PC-3 (cell line): ENCODE measurements at regions of chr3 and their contacts with region 1.

Region 1: GRCh38 chr3:171187706-171188290 is 161.3 kb upstream of the SLC2A2 start:
- DNase-seq: peak; percentile 61
- ATAC-seq: peak; percentile 41; the same call in 1 of the 2 replicates
- H3K4me3 ChIP-seq: no peak overlapping the region
- H3K27ac ChIP-seq: no peak overlapping the region
- H3K4me1 ChIP-seq: peaks cover 26% of the 10 kb centered on the region
- H3K27me3 ChIP-seq: no peaks in the 10 kb centered on the region
- CTCF ChIP-seq: peak; percentile 85

Region 2: GRCh38 chr3:171049861-171050444 is 137.8 kb before region 1 on chr3:
- CTCF ChIA-PET with region 1: interaction called, 3 read pairs
- POLR2A ChIA-PET with region 1: no interaction called
- intact Hi-C with region 1: loop called (anchors 1 kb)
- DNase-seq: peak; percentile 81
- ATAC-seq: peak; percentile 98
- H3K4me3 ChIP-seq: no peak overlapping the region
- H3K27ac ChIP-seq: no peak overlapping the region
- H3K4me1 ChIP-seq: peaks cover 9% of the 10 kb centered on the region
- H3K27me3 ChIP-seq: no peaks in the 10 kb centered on the region
- CTCF ChIP-seq: peak; percentile 90

Region 3: GRCh38 chr3:171261446-171261845 is 73.6 kb after region 1 on chr3:
- CTCF ChIA-PET with region 1: no interaction called
- POLR2A ChIA-PET with region 1: no interaction called
- intact Hi-C with region 1: loop called (anchors 5 kb)
- DNase-seq: peak; percentile 78
- ATAC-seq: peak; percentile 97
- H3K4me3 ChIP-seq: peak overlapping the region; percentile 20
- H3K27ac ChIP-seq: peak overlapping the region; percentile 69
- H3K4me1 ChIP-seq: peaks cover 31% of the 10 kb centered on the region
- H3K27me3 ChIP-seq: no peaks in the 10 kb centered on the region
- CTCF ChIP-seq: no peak

Region 4: GRCh38 chr3:171351676-171352075 is 163.9 kb after region 1 on chr3:
- CTCF ChIA-PET with region 1: no interaction called
- POLR2A ChIA-PET with region 1: no interaction called
- intact Hi-C with region 1: loop called (anchors 5 kb)
- DNase-seq: peak; percentile 98
- ATAC-seq: peak; percentile 76
- H3K4me3 ChIP-seq: no peak overlapping the region
- H3K27ac ChIP-seq: peak overlapping the region; percentile 76
- H3K4me1 ChIP-seq: peaks cover 80% of the 10 kb centered on the region
- H3K27me3 ChIP-seq: no peaks in the 10 kb centered on the region
- CTCF ChIP-seq: no peak

Region 5: GRCh38 chr3:171522651-171523050 is 334.9 kb after region 1 on chr3:
- CTCF ChIA-PET with region 1: no interaction called
- POLR2A ChIA-PET with region 1: no interaction called
- intact Hi-C with region 1: loop called (anchors 5 kb)
- DNase-seq: no peak
- ATAC-seq: no peak
- H3K4me3 ChIP-seq: no peak overlapping the region
- H3K27ac ChIP-seq: no peak overlapping the region
- H3K4me1 ChIP-seq: peaks cover 19% of the 10 kb centered on the region
- H3K27me3 ChIP-seq: no peaks in the 10 kb centered on the region
- CTCF ChIP-seq: no peak

Region 6: DNA sequence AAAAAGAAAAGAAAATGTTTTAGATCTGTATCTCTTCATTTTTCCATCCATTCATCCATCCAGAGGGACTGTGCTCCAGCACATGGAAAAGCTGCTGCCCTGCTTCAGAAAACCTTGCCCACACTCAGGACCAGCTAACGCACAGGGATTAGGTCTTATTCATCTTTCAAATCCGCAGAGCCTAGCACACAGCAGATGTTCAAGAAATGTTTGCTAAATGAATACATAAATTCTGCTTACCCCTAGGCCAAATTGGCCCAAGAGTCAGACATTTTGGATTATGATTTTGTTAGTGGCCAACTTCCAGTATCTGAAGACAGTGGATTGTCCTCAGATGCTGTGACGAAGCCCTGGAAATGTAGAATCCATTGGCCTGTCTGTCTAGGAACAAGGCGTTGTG is 1189.1 kb after region 1 on chr3:
- CTCF ChIA-PET with region 1: interaction called, 10 read pairs
- POLR2A ChIA-PET with region 1: no interaction called
- intact Hi-C with region 1: no loop called
- DNase-seq: no peak
- ATAC-seq: no peak
- H3K4me3 ChIP-seq: no peak overlapping the region
- H3K27ac ChIP-seq: no peak overlapping the region
- H3K4me1 ChIP-seq: no peaks in the 10 kb centered on the region; the same call in 1 of the 2 replicates
- H3K27me3 ChIP-seq: no peaks in the 10 kb centered on the region
- CTCF ChIP-seq: no peak